ENCODE measurements at regions of chr1 and their contacts with region 1.

Region 1: DNA sequence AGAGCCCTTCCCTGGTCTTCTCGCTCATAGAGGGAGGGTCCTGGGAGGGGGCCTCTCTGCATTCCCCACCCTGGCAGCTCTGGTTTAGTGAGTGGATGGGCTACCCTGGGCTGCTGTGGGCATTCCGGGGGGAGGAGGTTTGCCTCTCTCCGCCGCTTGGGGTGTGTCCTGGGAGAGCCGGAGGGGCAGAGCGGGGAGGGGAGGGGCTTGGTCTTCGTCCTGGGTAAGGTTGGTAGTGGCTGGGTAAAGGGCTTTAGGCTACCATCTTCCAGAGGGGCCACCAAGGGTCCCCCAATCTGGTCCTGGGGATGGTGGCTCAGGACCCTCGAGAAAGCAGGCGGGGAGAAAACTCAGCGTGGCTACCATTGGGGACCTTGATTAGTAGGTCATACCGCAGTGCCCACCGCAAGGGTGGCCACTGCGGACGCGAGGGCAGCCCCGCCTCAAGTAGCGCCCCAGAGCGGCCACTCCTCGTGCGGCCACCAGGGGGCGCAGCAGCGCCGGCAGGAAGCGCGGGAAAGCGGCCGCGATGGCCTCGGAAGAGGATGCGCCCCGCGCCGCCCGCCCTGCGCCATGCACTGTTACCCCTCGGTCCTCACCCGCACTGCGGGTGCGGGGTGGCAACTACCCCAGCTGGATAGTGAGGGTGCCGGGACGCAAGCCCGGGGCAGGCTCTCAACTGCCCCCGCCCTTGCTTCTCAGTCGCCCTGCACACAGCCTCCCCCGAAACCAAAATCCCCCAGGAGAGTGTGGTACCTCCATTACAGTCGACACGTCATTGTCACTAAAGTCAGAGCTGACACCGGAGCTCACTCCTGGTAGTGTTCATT is 44.1 kb upstream of the SLC25A33 start:
- DNase-seq: peak; percentile 86

Region 2: DNA sequence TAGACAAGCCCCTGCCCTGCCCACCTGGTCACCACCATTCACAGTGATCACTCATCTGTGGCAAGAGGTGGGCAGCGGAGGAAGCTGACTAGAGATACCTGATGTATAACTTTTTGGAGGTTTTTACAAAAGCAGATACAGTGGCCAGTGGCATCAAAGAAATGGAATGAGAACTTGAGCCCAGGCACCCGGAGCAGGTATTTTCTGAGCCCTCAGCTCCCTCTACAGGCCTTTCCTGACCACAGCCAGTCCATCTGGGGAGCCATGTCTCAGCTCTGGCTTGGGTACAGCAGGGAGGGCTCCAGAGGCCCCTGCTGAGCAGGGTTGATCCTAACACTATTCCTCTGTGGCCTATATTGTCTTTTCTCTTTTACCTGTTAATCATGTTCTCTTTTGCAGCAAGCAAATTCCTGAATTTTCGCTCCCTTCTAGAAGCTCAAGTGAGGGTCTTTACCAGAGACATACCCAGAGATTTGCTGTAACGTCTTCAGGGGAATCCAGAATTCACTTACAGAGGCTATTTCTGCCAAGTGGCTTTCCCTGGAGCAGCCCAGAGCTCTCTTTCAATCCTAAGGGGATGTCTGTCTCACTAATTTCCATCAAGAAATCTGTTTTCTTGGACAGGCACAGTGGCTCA is 393.5 kb before region 1 on chr1:
- CTCF ChIA-PET with region 1: interaction called, 13 read pairs
- POLR2A ChIA-PET with region 1: no interaction called
- DNase-seq: peak; percentile 65

Region 3: GRCh38 chr1:9267352-9267686 is 227.8 kb before region 1 on chr1:
- CTCF ChIA-PET with region 1: interaction called, 20 read pairs
- POLR2A ChIA-PET with region 1: interaction called, 3 read pairs
- DNase-seq: no peak

Region 4: GRCh38 chr1:9529190-9529589 is 34.0 kb after region 1 on chr1:
- CTCF ChIA-PET with region 1: no interaction called
- POLR2A ChIA-PET with region 1: no interaction called
- DNase-seq: no peak

Measured in HEK293T (cell line).